Thyroid gland (tissue), 4 donors: ENCODE measurements at regions of chr20 and their contacts with region 1.

Region 1: GRCh38 chr20:46174469-46175128 is 56.5 kb downstream of the CD40 start:
- DNase-seq: peak; percentile 80 to 81
- H3K4me3 ChIP-seq: no peak overlapping the region
- H3K27ac ChIP-seq: no peak overlapping the region
- H3K4me1 ChIP-seq: peaks cover 0 to 3% of the 10 kb centered on the region in 2 donors
- H3K27me3 ChIP-seq: peaks cover 9% of the 10 kb centered on the region
- CTCF ChIP-seq: peak; percentile 14 to 82 (median 50)
- POLR2A ChIP-seq: no peak

Region 2: DNA sequence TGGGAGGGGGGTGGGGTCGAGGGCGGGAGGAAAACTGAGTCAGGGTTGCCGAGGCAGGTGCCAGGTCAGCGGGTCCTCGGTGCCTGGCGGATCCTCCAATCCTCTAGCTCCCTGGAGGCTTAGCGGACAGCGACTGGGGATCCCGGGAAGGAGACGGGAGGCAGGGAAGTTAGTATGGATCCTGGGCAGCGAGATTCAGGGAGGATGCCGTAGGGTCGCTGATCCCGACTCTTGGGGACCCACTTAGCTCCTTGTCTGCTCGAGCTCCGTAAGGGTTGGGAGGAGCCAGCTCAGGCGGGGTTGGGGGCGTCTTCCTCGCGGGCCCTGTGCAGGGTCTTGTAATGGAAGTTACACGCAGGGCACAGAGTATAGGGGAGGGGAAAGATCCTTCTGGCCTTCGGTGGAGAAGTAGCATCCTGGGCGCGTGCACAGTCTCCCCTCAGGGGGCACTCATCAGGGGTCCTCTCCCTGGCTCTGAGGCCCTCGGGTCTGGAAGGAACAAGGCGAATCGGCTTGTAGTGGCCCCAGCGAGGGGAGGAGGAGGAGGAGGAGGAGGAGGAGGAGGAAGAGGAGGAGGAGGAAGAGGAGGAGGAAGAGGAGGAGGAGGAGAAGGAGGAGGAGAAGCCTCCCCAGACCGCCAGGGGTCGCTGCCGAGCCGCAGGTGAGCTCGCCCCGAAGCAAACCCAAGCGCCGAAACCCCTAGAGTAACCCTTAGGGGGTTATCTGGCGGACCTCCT is 152.0 kb before region 1 on chr20:
- intact Hi-C with region 1: loop called (anchors 5 kb)
- DNase-seq: peak; percentile 40 to 48
- H3K4me3 ChIP-seq: no peak overlapping the region
- H3K27ac ChIP-seq: no peak overlapping the region
- H3K4me1 ChIP-seq: peaks cover 4 to 13% of the 10 kb centered on the region in 2 donors
- H3K27me3 ChIP-seq: peaks cover 17% of the 10 kb centered on the region
- CTCF ChIP-seq: peak in 5 of 6 experiments; percentile 34 to 80 (median 57)
- POLR2A ChIP-seq: no peak

Region 3: GRCh38 chr20:46132705-46133120 is 41.9 kb before region 1 on chr20:
- intact Hi-C with region 1: loop called (anchors 2 kb)
- DNase-seq: peak; percentile 77
- H3K4me3 ChIP-seq: no peak overlapping the region
- H3K27ac ChIP-seq: no peak overlapping the region
- H3K4me1 ChIP-seq: peaks cover 0 to 9% of the 10 kb centered on the region in 2 donors
- H3K27me3 ChIP-seq: no peaks in the 10 kb centered on the region
- CTCF ChIP-seq: peak; percentile 45 to 90 (median 81)
- POLR2A ChIP-seq: no peak

Region 4: DNA sequence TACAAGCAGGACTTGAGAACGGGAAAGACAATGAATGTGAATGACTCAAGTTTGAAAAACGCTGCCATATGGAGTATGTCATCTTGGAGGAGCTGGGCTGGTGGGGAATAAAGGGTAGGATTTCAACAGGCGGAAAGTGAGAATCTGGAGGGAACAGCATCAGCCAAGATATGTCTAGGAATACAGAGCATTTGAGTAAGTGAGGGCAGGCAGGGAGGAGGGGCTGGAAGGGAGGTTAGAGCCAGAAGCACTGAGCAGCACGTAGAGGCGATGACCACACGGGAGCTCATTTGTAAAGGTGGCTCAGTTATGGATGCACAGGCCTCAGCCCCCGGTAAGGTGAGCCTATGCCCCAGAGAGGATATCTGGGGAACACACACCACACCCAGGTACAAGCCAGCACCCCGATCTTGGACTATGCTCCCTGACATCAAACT is 1066.8 kb after region 1 on chr20:
- intact Hi-C with region 1: no loop called
- DNase-seq: no peak
- H3K4me3 ChIP-seq: no peak overlapping the region
- H3K27ac ChIP-seq: no peak overlapping the region
- H3K4me1 ChIP-seq: peaks cover 10 to 17% of the 10 kb centered on the region in 2 donors
- H3K27me3 ChIP-seq: no peaks in the 10 kb centered on the region
- CTCF ChIP-seq: no peak
- POLR2A ChIP-seq: no peak